Heart left ventricle (tissue), 16 donors: ENCODE measurements at regions of chr11 and their contacts with region 1.

Region 1: GRCh38 chr11:133966921-133967598 is 10.3 kb upstream of the IGSF9B start:
- DNase-seq: peak; percentile 65 to 85 (median 73)
- ATAC-seq: peak; percentile 25 to 78 (median 69)
- H3K4me3 ChIP-seq: peak overlapping the region in 9 of 12 donors; percentile 33 to 54 (median 41)
- H3K27ac ChIP-seq: peak overlapping the region in 2 of 12 donors; percentile 17 to 29
- H3K4me1 ChIP-seq: peaks cover 0 to 10% (median 3%) of the 10 kb centered on the region in 12 donors
- H3K27me3 ChIP-seq: peaks cover 0 to 5% (median 0%) of the 10 kb centered on the region in 9 donors
- CTCF ChIP-seq: peak; percentile 53 to 78 (median 66)
- POLR2A ChIP-seq: no peak

Region 2: GRCh38 chr11:134033696-134034491 is 66.8 kb after region 1 on chr11:
- intact Hi-C with region 1: loop called in 2 of 10 experiments (anchors 2 to 5 kb)
- DNase-seq: peak; percentile 89 to 94 (median 90)
- ATAC-seq: peak; percentile 89 to 95 (median 92)
- H3K4me3 ChIP-seq: peak overlapping the region in 10 of 12 donors; percentile 19 to 52 (median 33)
- H3K27ac ChIP-seq: peak overlapping the region; percentile 76 to 98 (median 88)
- H3K4me1 ChIP-seq: peaks cover 3 to 61% (median 45%) of the 10 kb centered on the region in 12 donors
- H3K27me3 ChIP-seq: no peaks in the 10 kb centered on the region
- CTCF ChIP-seq: peak in 1 of 12 donors; percentile 4
- POLR2A ChIP-seq: no peak

Region 3: DNA sequence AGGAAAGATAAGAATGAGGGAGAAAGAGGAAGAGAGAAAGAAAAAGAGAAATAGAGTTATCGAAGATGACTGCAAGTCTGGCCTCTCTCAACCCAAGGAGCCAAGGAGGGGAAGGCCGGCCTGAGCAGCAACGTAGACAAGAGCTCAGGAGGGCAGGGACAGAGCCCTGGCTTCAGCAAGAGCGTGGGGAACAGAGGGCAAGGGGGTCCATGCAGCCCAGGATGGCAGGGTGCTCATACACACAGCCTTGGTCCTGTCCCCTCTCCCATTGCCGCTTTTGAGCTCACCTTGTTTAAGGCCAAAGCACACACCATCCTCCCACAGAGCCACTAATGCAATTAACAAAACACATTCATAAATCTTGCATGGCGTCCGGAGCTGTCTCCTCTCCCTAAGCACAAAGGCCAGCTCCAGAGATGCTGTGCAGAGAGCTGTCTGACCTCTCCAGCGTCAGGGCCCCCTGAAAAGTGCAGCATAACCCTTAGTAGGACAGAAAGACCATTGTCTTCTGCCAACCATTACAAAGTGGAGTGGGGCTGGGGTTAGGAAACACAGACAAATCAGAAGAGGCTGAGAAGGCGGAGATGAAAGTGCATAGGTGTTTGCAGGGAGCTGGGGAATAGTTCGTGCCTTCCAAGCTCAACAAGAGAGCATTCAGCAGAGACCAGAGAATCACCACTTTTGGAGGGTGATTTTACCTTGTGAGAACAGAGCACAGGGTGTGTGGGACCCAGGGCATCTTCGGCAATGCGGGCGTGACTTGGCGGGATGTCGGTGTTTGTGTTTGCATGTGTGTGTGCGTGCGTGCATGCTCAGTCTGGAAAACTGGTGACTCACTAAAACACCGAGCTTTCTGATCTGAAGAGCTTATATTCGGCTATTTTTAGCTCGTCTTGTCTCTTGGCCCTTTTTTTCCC is 73.6 kb after region 1 on chr11:
- intact Hi-C with region 1: loop called in 4 of 10 experiments (anchors 1 to 5 kb)
- DNase-seq: peak in 2 of 5 donors; percentile 48 to 49
- ATAC-seq: no peak
- H3K4me3 ChIP-seq: no peak overlapping the region
- H3K27ac ChIP-seq: peak overlapping the region in 2 of 12 donors; percentile 57 to 93
- H3K4me1 ChIP-seq: peaks cover 0 to 61% (median 34%) of the 10 kb centered on the region in 12 donors
- H3K27me3 ChIP-seq: no peaks in the 10 kb centered on the region
- CTCF ChIP-seq: no peak
- POLR2A ChIP-seq: no peak

Region 4: GRCh38 chr11:134139873-134140331 is 172.8 kb after region 1 on chr11:
- intact Hi-C with region 1: loop called in 1 of 10 experiments (anchors 10 kb)
- DNase-seq: peak in 4 of 5 donors; percentile 49 to 69 (median 67)
- ATAC-seq: peak; percentile 81 to 92 (median 88)
- H3K4me3 ChIP-seq: no peak overlapping the region
- H3K27ac ChIP-seq: peak overlapping the region in 5 of 12 donors; percentile 6 to 72 (median 26)
- H3K4me1 ChIP-seq: peaks cover 0 to 17% (median 5%) of the 10 kb centered on the region in 12 donors
- H3K27me3 ChIP-seq: no peaks in the 10 kb centered on the region
- CTCF ChIP-seq: peak; percentile 73 to 97 (median 89)
- POLR2A ChIP-seq: no peak